Posterior cingulate gyrus (tissue), 11 donors: ENCODE measurements at regions of chr18 and their contacts with region 1.

Region 1: GRCh38 chr18:11733031-11733430 is 44.0 kb downstream of the GNAL start:
- DNase-seq: peak; percentile 71 to 97 (median 82)

Region 2: GRCh38 chr18:11654736-11655605 is 78.1 kb before region 1 on chr18:
- intact Hi-C with region 1: loop called (anchors 10 kb)
- DNase-seq: peak in 9 of 10 donors; percentile 56 to 95 (median 68)

Region 3: GRCh38 chr18:11908182-11909060 is 175.4 kb after region 1 on chr18 and contains the start of gene MPPE1:
- intact Hi-C with region 1: no loop called
- DNase-seq: peak; percentile 76 to 98 (median 88)